GM13976 (cell line): ENCODE measurements at regions of chr4 and their contacts with region 1.

Region 1: DNA sequence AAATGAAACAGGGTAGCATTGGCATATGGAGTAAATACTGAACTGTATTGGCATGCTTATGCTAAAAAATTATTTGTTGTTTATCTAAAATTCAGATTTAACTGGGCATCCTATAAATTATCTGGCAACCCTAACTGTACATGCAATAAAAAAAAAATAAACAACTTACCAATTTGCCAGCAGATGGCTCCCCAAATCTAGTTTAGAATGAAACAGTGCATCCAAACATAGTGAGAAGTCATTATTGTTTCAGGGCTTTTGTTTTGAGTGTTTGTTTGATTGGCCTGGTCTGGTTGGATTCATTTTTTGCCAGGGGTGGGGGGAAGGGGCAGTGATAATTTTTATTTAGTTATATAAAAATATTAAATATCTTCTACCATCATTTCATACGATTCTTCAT is 12.8 kb upstream of the NSUN7 start:
- DNase-seq: peak; percentile 65
- CTCF ChIP-seq: peak; percentile 35

Region 2: GRCh38 chr4:40840985-40841571 is 104.2 kb after region 1 on chr4:
- in situ Hi-C with region 1: loop called (anchors 10 kb)
- DNase-seq: peak; percentile 59
- CTCF ChIP-seq: peak; percentile 83

Region 3: DNA sequence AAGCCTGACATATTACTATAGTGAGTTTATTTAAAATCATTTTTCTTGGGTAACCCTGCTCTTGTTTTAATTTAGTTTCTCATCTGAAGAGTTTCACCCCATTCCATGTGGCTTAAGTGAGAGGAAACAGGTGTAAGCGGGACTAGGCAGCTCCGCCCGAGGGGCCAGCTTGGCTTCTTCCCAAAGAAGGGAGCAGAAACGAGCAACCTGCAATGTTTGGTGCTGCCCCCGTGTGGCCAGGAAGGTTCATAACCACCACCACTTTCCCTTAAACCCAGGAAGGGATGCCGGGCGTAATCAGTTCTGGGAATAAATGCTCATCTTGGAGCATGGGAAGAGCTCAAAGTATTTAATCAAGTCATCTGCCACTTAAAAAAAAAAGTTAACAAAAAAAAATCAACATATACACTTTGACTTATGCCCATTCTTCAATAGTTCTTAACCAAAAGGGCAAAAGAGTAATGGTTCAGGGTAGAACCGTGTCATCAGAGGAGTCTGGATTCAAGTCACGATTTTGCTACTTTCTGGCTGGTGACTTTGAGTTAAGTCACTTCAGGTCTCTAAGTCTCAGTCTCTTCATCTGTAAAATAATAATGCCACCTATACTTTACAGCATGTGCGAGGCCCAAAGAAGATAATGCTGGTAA is 160.8 kb after region 1 on chr4:
- in situ Hi-C with region 1: loop called (anchors 10 kb)
- DNase-seq: peak; percentile 80
- CTCF ChIP-seq: peak; percentile 75

Region 4: GRCh38 chr4:41081847-41082246 is 344.9 kb after region 1 on chr4:
- in situ Hi-C with region 1: no loop called
- DNase-seq: no peak
- CTCF ChIP-seq: no peak